Mucosa of descending colon (tissue), 3 donors: ENCODE measurements at regions of chr20 and their contacts with region 1.

Region 1: GRCh38 chr20:58236612-58237330 is 8.3 kb upstream of the ANKRD60 start:
- DNase-seq: peak; percentile 73 to 87 (median 85)
- ATAC-seq: peak; percentile 97
- H3K4me3 ChIP-seq: no peak overlapping the region
- H3K4me1 ChIP-seq: peaks cover 3% of the 10 kb centered on the region
- CTCF ChIP-seq: peak; percentile 92

Region 2: DNA sequence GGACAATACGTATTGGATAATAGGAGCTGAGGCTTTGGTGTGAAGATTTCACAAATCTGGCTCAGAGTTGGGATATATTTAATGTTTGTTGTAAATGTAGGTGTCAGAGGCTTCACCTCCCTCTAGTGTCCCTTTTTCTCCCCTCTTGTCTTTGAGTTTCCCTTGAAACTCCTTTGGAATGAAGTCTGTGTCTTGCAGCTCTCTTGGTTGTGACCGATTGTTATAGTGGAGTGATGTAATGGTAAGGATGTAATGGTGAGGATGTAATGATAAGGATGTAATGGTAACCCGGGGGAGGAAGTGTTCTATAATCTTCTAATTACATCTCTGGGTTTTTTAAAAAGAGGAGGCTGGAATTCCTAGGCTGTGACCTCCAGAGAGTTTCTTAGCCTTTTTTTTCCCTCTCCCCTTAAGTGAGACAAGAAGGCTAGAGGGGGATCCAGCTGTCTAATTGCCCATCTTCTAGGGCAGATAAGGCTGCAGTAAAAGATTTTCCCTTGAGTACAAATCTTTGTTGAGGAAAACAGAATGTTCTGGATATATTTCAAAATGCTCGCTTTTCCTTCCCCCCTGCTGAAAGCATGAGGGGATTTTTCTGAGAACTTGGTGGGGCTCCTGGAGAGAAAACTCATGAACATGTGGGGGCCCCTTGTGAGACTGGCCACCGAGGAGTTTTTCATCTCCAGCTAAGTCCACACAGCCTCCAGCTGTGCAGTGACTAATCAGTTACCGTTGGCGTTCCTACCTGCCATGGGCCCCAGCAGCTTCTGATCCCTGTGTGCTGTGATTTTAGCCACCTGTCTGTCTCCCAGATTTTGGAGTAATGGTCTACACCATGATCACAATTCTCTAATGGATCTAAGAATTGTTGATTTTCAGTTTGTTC is 370.3 kb before region 1 on chr20:
- intact Hi-C with region 1: no loop called
- DNase-seq: no peak
- ATAC-seq: no peak
- H3K4me3 ChIP-seq: no peak overlapping the region
- H3K4me1 ChIP-seq: no peaks in the 10 kb centered on the region
- CTCF ChIP-seq: no peak

Region 3: DNA sequence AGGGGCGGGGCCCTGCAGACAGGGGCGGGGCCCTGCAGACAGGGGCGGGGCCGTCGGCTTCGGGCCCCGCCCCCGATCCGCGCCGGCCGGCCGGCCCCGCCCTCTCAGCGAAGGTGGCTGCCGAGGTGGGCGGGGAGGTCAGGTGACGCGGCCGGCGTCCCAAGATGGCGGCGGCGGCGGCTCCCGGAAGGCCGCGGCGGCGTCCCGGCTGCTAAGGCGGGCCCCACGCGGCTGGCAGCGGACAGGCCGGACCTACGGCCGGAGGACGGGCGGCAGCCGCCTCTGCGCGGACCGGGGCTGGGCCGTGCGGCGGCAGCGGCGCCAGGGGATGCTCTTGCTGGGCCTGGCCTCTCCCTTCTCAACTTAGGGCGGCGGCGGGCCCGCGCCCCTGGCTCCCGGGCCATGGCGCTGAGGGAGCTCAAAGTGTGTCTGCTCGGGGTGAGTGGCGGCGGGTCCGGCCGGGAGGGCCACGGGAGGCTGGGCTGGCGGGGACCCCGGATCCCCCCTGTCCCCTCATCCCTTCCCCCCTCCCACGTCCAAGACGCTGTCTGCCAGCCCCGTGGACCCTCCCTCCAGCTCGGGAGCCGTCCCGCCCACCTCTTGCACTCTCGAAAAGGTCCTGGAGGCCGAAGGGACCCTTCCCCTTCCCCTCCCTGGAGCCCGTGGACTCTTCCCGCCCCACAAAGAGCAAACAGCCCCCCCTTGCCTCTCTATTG is 73.0 kb after region 1 on chr20 and contains the start of gene RAB22A:
- intact Hi-C with region 1: no loop called
- DNase-seq: peak; percentile 81 to 87 (median 87)
- ATAC-seq: peak; percentile 95
- H3K4me3 ChIP-seq: peak within 1 kb of the TSS; percentile 92
- H3K4me1 ChIP-seq: peaks cover 25% of the 10 kb centered on the region
- CTCF ChIP-seq: no peak
- total RNA-seq, gene RAB22A: 20.2 to 27.3 (median 21.0) TPM

Region 4: DNA sequence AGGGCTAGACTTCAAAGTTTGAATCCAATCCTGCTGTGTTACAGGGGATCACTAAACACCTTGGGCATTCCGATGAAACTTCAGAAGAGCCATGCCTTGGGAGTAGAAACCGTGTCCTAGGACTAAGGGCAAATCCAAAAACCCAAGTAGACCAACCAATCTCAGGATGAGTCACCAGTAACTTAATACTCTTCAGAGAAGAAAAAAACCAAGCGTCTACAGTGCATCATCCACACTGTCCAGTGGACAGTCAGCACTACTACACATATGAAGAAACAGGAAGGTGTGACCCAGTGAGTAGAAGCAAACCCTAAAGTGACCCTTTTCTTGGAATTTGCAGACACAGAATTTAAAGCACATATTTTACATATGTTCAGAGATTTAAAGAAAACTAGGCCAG is 112.8 kb after region 1 on chr20:
- intact Hi-C with region 1: no loop called
- DNase-seq: no peak
- ATAC-seq: no peak
- H3K4me3 ChIP-seq: no peak overlapping the region
- H3K4me1 ChIP-seq: no peaks in the 10 kb centered on the region
- CTCF ChIP-seq: no peak

Region 5: DNA sequence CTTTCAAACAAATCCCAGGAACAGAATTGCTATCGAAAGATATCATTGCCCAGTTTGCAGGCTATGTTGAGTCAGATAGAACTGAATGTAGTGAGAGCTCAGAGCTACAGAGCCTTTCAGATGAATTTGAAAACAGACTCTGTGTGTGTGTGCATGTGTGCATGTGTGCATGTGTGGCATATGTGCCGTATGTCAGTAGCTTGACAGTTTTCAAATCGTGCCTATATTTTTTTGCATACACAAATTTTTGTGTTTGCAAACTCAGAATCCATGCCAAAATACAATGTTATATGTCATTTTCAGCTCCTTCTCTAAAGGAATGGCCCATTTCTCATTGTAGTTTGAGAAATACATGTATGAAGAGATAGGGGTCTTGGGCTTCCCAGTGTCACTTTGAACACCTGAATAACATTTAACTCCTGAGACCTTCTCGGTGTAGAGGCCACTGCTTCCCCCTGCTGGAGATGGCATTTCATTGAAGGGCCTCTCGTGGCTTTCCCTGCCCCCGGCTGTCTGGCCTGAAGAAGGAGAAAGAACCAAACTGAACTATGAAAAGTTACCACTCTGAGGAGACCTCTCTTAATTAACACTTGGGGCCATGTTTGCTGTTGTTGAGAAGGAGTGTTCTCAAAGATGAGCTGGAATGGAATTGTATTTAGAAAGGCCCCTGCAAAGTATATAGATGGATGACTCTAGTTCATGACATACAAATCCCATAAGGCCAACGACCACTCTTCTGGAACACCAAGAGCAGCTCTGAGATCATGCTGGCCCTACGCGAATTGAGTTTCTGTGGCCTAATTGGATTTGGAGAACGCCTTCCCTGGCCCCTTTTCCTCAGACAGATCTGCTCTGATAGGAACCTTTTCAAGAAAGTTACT is 211.0 kb after region 1 on chr20:
- intact Hi-C with region 1: loop called (anchors 5 to 10 kb)
- DNase-seq: peak in 2 of 3 donors; percentile 62 to 73
- ATAC-seq: peak; percentile 77
- H3K4me3 ChIP-seq: no peak overlapping the region
- H3K4me1 ChIP-seq: peaks cover 6% of the 10 kb centered on the region
- CTCF ChIP-seq: peak; percentile 14

Region 6: GRCh38 chr20:58458180-58459057 is 221.6 kb after region 1 on chr20:
- intact Hi-C with region 1: loop called in 1 of 2 experiments (anchors 10 kb)
- DNase-seq: no peak
- ATAC-seq: no peak
- H3K4me3 ChIP-seq: no peak overlapping the region
- H3K4me1 ChIP-seq: no peaks in the 10 kb centered on the region
- CTCF ChIP-seq: no peak

Region 7: DNA sequence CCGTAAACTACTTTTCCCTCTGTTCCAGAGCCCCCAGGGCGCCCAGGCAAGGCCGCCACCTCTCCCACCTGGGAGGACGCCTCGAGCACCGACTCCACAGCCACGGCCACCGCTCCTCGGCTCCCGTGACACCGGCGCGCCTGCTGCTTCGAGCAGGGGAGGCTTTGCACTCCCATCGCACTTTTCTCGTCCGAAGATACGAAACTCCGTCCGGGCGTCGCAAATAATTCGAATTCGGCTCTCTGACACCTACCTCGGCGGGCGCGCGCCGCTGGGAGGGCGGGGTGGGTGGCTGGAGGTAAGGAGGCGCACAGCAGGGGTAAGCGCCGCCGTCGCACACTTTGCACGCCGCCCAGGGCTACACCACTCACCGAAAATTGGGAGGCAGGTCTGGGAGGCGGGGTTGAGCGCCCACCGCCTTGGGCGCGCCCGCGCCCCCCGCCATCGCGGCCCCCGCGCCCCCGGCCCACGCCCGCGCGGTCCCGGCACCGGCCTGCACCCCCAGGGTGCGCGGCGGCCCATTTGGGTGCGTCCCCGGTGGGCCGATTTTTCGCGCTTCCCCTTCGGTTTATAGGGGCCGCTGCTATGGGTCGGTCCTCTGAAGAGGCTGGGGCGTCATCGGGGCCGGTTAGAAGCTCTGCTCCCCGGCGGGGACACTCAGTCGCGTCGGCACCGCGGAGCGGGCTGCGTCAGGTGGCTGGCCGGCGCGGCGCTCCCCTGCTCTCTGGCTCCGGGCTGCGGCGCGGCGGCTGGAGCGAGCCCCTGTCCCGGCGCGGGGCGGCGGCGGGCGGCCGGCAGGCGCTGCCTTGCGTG is 652.0 kb after region 1 on chr20:
- intact Hi-C with region 1: no loop called
- DNase-seq: peak; percentile 83 to 92 (median 88)
- ATAC-seq: peak; percentile 69
- H3K4me3 ChIP-seq: peak overlapping the region; percentile 26
- H3K4me1 ChIP-seq: peaks cover 7% of the 10 kb centered on the region
- CTCF ChIP-seq: no peak